A549 (cell line): ENCODE measurements at regions of chr5 and their contacts with region 1.

Region 1: GRCh38 chr5:178130604-178131485 is at the start of gene RMND5B:
- DNase-seq: peak; percentile 84 to 86
- ATAC-seq: peak; percentile 94
- H3K4me3 ChIP-seq: peak within 1 kb of the TSS; percentile 77
- H3K27ac ChIP-seq: peak within 1 kb of the TSS; percentile 94 to 98
- H3K4me1 ChIP-seq: peaks cover 7% of the 10 kb centered on the region; the same call in 1 of the 3 replicates
- CTCF ChIP-seq: no peak
- EP300 ChIP-seq: no peak
- POLR2A ChIP-seq: peak; percentile 57
- RAD21 ChIP-seq: 0 out of 5 replicates have a peak, but pooled peaks of 1 of the 2 experiments have one; percentile 15
- polyA plus RNA-seq, gene RMND5B: 30.3 and 31.8 TPM in 2 replicates

Region 2: DNA sequence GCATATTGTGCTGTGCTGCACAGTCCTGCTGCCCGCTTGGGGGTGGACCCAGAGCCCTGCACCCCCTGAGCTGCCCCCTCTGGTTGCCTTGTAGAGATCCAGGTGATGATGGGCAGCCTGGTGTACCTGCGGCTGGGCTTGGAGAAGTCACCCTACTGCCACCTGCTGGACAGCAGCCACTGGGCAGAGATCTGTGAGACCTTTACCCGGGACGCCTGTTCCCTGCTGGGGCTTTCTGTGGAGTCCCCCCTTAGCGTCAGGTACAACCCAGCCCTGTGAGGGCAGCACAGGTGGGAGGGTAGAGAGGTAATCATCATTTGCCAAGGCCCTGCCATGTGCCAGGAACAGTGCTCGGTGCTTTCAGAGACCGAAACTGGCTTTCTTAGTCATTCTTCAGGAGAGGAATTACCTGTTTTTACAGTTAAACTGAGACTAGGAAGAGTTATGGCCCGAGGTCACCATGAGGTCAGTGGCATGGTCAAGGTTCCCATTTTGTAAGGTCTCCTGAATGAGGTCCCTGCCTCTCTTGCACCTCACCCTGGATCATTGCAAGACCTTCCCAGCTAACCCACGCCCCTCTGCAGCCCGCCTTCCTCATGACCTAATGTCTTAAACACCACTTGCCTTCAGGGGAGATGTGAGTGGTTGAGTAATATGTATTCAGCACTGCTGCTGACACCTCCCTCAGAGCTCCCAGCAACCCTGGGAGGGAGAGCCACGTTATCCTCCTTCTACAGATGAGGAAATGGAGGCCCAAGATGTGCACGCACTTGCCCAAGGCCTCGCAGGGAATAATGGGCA is 15.4 kb after region 1 on chr5:
- CTCF ChIA-PET with region 1: interaction called, 32 read pairs
- POLR2A ChIA-PET with region 1: no interaction called
- DNase-seq: peak; percentile 75 to 82
- ATAC-seq: peak; percentile 86 to 90
- H3K4me3 ChIP-seq: no peak overlapping the region
- H3K27ac ChIP-seq: no peak overlapping the region
- H3K4me1 ChIP-seq: peaks cover 8% of the 10 kb centered on the region; the same call in 2 of the 3 replicates
- CTCF ChIP-seq: peak; percentile 83
- EP300 ChIP-seq: no peak
- POLR2A ChIP-seq: no peak
- RAD21 ChIP-seq: peak; percentile 56 to 63

Region 3: GRCh38 chr5:179195561-179196404 is 1064.9 kb after region 1 on chr5:
- CTCF ChIA-PET with region 1: no interaction called
- POLR2A ChIA-PET with region 1: no interaction called
- DNase-seq: no peak
- ATAC-seq: no peak
- H3K4me3 ChIP-seq: no peak overlapping the region
- H3K27ac ChIP-seq: no peak overlapping the region
- H3K4me1 ChIP-seq: no peaks in the 10 kb centered on the region
- CTCF ChIP-seq: no peak
- EP300 ChIP-seq: no peak
- POLR2A ChIP-seq: no peak
- RAD21 ChIP-seq: no peak